Activated naive CD4-positive, alpha-beta T cell treated with anti-CD3 and anti-CD28 coated beads for 36 hours (primary cell): ENCODE measurements at regions of chr6 and their contacts with region 1.

Region 1: DNA sequence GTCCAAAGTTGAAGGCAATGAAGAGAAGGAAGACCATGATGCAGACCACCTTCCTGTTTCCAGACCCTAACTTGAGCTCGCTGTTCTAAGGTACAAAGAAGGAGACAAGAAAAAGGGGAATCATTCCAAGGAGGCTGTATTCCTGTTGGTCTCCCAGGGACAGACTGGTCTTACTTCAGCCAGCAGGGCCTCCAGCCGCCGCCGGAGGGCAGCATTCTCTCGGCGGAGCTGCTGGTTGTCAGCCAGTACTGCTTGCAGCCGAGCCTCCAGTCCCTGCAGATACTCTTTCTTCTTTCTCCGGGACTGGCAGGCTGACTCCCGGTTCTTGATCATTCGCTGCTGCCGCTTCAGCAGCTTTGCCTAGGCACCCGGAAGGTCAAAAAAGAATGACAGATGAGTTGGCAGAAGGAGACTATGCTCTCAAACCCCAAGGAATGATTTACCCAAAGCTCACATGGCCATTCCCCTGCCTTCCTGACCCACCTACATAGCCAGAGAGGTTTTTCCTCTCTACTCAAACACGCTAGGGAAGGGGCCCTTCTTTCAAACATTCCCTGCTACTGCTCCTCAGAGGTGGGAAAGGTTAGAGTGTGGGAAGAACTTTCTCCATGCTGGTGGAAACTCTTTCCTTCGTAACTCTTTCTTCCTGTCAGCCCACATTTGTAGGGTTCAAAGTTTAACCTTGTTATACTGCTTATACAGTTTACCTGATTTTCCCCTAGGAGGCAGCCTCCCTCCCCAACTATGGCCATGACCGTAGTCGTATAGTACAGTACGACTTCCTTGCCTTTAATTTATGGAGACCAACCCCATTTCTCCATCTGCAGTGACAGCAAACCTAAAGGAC is 9.0 kb downstream of the ATF6B start:
- DNase-seq: peak; percentile 82
- H3K4me3 Mint-ChIP-seq: no peak overlapping the region
- H3K27ac Mint-ChIP-seq: peak overlapping the region; percentile 13
- H3K4me1 Mint-ChIP-seq: peaks cover 10% of the 10 kb centered on the region
- H3K27me3 Mint-ChIP-seq: no peaks in the 10 kb centered on the region

Region 2: DNA sequence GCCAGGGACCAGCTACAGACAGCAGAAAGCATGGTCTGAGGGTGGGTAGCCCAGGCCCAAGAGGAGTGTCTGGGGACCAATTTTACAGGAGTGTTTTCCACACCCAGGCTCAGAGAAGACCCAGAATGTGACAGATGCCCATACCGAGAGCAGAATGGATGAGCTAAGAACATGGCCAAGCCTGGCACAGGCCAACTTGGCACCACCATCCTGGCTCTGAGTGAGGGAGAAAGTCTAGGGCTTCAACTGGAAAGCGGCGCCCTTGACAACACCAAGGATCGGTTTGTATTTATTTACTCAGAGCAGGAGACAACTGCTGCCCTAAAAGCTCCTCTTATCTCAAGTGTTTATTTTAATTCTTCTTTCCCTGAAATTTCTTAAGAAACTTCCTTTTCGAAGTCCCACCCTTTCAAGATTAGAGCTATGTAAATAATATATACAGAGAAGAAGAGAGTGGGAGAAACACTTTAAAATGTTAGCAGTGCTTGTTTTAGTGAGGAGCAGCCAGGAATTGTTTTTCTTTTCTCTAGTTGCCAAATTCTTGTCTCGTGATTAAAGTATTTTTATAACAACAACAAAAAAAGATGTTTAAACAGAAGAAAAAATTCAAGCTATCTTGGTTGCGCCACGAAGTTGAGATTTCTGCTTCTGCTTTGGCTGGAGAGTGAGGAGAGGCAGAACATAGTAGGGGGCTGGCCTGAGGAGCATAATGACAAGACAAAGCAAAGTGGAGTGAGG is 26.1 kb before region 1 on chr6:
- CTCF ChIA-PET with region 1: interaction called, 10 read pairs
- intact Hi-C with region 1: no loop called
- DNase-seq: no peak
- H3K4me3 Mint-ChIP-seq: no peak overlapping the region
- H3K27ac Mint-ChIP-seq: no peak overlapping the region
- H3K4me1 Mint-ChIP-seq: peaks cover 6% of the 10 kb centered on the region
- H3K27me3 Mint-ChIP-seq: peaks cover 29% of the 10 kb centered on the region

Region 3: DNA sequence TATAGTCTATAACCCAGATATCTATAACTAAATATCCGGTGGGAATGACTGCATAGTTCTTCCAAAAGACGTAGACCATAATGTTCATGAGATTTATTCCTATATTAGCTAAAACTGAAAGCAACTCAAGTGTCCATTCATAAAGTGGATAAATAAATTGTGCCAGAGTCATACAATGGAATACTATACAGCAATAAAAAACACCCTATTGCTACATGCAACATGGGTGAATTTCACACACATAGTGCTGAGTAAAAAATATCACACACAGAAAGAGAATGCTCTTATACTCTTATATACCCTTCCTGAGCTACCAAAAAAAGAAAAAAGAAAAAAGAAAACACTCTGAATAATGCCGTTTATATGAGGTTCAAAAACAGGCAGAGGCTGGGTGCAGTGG is 16.8 kb before region 1 on chr6:
- CTCF ChIA-PET with region 1: interaction called, 11 read pairs
- intact Hi-C with region 1: no loop called
- DNase-seq: no peak
- H3K4me3 Mint-ChIP-seq: no peak overlapping the region
- H3K27ac Mint-ChIP-seq: no peak overlapping the region
- H3K4me1 Mint-ChIP-seq: no peaks in the 10 kb centered on the region
- H3K27me3 Mint-ChIP-seq: peaks cover 10% of the 10 kb centered on the region

Region 4: DNA sequence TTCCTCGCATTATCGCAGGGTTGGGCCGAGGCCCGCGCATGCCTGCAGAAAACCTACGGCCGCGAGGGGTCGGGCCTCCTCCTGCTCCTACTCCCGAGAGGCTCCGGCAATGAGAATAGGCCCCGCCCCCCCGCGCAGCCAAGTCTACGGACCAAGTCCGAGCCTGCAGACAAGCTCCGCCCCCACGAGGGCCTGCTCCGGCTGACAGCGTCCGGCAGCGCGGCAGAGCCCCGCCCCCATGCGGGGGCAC is 76.6 kb after region 1 on chr6:
- CTCF ChIA-PET with region 1: interaction called, 6 read pairs
- intact Hi-C with region 1: loop called (anchors 1 kb)
- DNase-seq: peak; percentile 100
- H3K4me3 Mint-ChIP-seq: peak overlapping the region; percentile 97
- H3K27ac Mint-ChIP-seq: peak overlapping the region; percentile 95
- H3K4me1 Mint-ChIP-seq: peaks cover 36% of the 10 kb centered on the region
- H3K27me3 Mint-ChIP-seq: no peaks in the 10 kb centered on the region